ENCODE measurements at regions of chr9 and their contacts with region 1.

Region 1: DNA sequence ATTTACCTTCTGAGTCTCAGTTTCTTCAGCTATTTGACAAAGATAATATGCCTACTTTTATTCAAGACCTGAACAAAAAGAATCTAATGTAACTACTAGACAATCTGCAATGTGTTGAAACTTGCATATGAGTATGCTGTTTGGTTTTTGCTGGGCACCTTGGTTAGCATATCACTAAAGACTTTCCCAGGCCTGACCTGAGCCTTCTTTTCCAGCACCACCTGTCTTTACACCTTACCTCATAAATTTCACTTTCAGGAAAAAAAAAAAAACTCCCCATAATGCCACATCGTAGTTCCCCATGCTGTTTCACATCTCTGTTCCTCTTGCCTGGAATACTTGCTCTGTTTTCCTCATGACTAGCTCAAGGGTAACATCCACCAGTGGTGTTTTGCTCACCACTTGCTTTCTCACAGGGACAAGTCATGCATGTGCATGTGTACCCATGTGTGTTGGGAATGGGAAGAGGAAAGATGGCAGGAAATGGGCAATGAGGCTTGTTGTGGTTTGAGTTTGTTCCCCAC is 45.6 kb upstream of the TLE4 start:
- DNase-seq: no peak
- H3K4me3 ChIP-seq: no peak overlapping the region
- H3K27ac ChIP-seq: no peak overlapping the region
- H3K4me1 ChIP-seq: no peaks in the 10 kb centered on the region
- H3K27me3 ChIP-seq: no peaks in the 10 kb centered on the region
- CTCF ChIP-seq: no peak
- EP300 ChIP-seq: no peak
- POLR2A ChIP-seq: no peak

Region 2: GRCh38 chr9:78786794-78787193 is 739.4 kb before region 1 on chr9:
- in situ Hi-C with region 1: no loop called
- intact Hi-C with region 1: loop called (anchors 5 kb)
- DNase-seq: no peak
- H3K4me3 ChIP-seq: no peak overlapping the region
- H3K27ac ChIP-seq: no peak overlapping the region
- H3K4me1 ChIP-seq: no peaks in the 10 kb centered on the region
- H3K27me3 ChIP-seq: no peaks in the 10 kb centered on the region
- CTCF ChIP-seq: no peak
- EP300 ChIP-seq: no peak
- POLR2A ChIP-seq: no peak

Region 3: DNA sequence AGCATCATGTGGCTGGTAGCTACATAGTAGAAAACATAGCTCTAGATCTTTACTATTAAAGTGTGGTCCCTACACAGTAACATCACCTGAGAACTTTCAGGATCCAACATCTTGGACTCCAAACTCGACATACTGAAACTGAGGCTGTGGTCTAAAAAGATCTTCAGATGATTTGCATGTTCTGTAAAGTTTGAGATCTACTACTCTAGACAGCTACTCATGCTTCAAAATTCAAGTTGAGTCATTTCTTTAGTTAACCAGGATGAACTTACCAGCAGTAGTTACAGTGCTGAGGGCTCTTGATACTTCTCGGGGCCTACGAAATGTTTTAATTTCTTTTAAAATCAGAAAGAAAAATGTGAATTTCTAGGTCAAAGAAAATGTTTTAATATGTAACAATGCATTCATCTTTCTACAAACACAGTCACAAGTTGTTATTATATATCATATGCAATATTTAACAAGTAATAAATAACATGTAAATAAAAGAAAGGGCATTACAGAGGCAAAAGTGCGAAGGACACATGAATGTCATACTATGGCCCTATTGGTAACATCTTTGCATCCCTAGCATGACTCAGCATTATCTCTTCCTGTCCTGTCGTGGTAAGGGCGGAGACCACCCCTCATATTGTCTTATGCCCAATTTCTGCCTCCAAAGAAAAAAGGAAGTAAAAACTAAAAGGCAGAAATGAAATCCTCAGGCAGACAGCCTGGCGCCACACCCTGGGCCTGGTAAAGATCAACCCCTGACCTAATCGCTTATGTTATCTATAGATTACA is 518.3 kb before region 1 on chr9:
- in situ Hi-C with region 1: no loop called
- intact Hi-C with region 1: no loop called
- DNase-seq: no peak
- H3K4me3 ChIP-seq: no peak overlapping the region
- H3K27ac ChIP-seq: no peak overlapping the region
- H3K4me1 ChIP-seq: no peaks in the 10 kb centered on the region
- H3K27me3 ChIP-seq: no peaks in the 10 kb centered on the region
- CTCF ChIP-seq: no peak
- EP300 ChIP-seq: no peak
- POLR2A ChIP-seq: no peak

Region 4: GRCh38 chr9:79377339-79377855 is 148.8 kb before region 1 on chr9:
- in situ Hi-C with region 1: no loop called
- intact Hi-C with region 1: no loop called
- DNase-seq: no peak
- H3K4me3 ChIP-seq: no peak overlapping the region
- H3K27ac ChIP-seq: no peak overlapping the region
- H3K4me1 ChIP-seq: no peaks in the 10 kb centered on the region
- H3K27me3 ChIP-seq: no peaks in the 10 kb centered on the region
- CTCF ChIP-seq: no peak
- EP300 ChIP-seq: no peak
- POLR2A ChIP-seq: no peak